ENCODE measurements at regions of chr7 and their contacts with region 1.

Region 1: DNA sequence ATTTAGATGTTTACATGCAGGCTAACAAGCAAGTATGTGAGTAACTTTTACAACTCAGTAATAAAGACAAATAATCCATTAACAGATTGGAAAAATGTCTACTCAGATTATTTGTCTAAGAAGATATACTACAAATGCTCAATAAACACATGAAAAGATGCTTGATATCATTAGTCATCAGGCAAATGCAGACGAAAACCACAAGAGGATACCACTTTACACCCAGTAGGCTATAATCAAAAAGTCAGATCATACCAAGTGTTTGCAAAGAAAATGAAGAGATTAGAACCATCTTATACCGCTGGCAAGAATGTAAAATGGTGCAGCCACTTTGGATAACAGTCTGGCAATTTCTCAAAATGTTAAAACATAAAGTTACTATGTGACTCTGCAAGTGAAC is 84.1 kb downstream of the MALSU1 start:
- DNase-seq: no peak
- ATAC-seq: no peak
- H3K4me3 ChIP-seq: no peak overlapping the region
- H3K27ac ChIP-seq: no peak overlapping the region
- H3K4me1 ChIP-seq: no peaks in the 10 kb centered on the region
- H3K27me3 ChIP-seq: no peaks in the 10 kb centered on the region
- CTCF ChIP-seq: no peak

Region 2: GRCh38 chr7:23315366-23315765 is 67.9 kb before region 1 on chr7:
- CTCF ChIA-PET with region 1: no interaction called
- POLR2A ChIA-PET with region 1: no interaction called
- in situ Hi-C with region 1: no loop called
- intact Hi-C with region 1: no loop called
- DNase-seq: no peak
- ATAC-seq: peak; percentile 54
- H3K4me3 ChIP-seq: no peak overlapping the region
- H3K27ac ChIP-seq: no peak overlapping the region
- H3K4me1 ChIP-seq: peaks cover 7% of the 10 kb centered on the region
- H3K27me3 ChIP-seq: no peaks in the 10 kb centered on the region
- CTCF ChIP-seq: no peak

Region 3: DNA sequence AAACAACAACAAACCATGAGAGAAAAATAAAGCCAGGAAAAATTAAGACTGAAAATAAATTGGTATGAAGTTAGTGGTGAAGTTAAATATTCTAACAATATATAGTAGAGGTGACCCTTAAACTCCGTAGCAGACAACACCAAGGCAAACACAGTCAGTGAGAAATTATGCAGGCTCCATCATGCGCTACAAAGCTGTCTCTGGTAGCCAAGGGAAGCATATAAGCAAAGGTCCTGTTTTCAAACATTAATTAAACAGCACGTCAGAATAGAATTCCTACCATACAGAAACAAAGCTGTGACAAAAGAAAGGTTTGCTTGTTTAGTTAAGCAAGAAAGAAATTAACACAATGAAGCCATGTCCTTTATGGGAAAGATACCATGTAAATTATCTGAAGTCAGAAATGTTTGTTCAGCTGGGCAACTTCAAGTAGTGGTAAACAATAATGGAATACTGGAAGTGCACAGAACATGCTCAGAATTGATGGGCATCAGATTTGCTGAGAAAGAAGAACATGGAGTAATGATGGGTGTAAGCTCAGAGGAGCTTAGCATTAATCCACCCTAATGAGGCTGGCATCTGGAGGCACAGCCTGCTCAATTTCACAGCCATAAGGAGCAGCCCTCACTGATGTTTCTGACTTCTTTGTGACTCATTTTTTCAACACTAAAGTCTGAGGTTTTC is 11.4 kb after region 1 on chr7:
- CTCF ChIA-PET with region 1: no interaction called
- POLR2A ChIA-PET with region 1: interaction called, 11 read pairs
- in situ Hi-C with region 1: no loop called
- intact Hi-C with region 1: no loop called
- DNase-seq: no peak
- ATAC-seq: no peak
- H3K4me3 ChIP-seq: no peak overlapping the region
- H3K27ac ChIP-seq: no peak overlapping the region
- H3K4me1 ChIP-seq: 0 out of 2 replicates have a peak, but pooled peaks cover 4% of the 10 kb centered on the region
- H3K27me3 ChIP-seq: no peaks in the 10 kb centered on the region
- CTCF ChIP-seq: no peak